Heart right ventricle (tissue), 16 donors: ENCODE measurements at regions of chr11 and their contacts with region 1.

Region 1: GRCh38 chr11:17978553-17979287 is 34.1 kb downstream of the SERGEF start:
- DNase-seq: peak; percentile 36 to 46
- ATAC-seq: peak; percentile 70 to 91 (median 84)
- H3K4me3 ChIP-seq: no peak overlapping the region
- H3K27ac ChIP-seq: no peak overlapping the region
- H3K4me1 ChIP-seq: peaks cover 0 to 19% (median 0%) of the 10 kb centered on the region in 9 donors
- H3K27me3 ChIP-seq: no peaks in the 10 kb centered on the region
- CTCF ChIP-seq: peak; percentile 38 to 81 (median 73)

Region 2: GRCh38 chr11:17405232-17406005 is 573.3 kb before region 1 on chr11:
- intact Hi-C with region 1: no loop called
- DNase-seq: peak; percentile 71 to 74
- ATAC-seq: peak; percentile 77 to 98 (median 94)
- H3K4me3 ChIP-seq: no peak overlapping the region
- H3K27ac ChIP-seq: peak overlapping the region; percentile 50 to 87 (median 75)
- H3K4me1 ChIP-seq: peaks cover 5 to 26% (median 20%) of the 10 kb centered on the region in 9 donors
- H3K27me3 ChIP-seq: no peaks in the 10 kb centered on the region
- CTCF ChIP-seq: peak in 6 of 9 donors; percentile 23 to 47 (median 36)

Region 3: DNA sequence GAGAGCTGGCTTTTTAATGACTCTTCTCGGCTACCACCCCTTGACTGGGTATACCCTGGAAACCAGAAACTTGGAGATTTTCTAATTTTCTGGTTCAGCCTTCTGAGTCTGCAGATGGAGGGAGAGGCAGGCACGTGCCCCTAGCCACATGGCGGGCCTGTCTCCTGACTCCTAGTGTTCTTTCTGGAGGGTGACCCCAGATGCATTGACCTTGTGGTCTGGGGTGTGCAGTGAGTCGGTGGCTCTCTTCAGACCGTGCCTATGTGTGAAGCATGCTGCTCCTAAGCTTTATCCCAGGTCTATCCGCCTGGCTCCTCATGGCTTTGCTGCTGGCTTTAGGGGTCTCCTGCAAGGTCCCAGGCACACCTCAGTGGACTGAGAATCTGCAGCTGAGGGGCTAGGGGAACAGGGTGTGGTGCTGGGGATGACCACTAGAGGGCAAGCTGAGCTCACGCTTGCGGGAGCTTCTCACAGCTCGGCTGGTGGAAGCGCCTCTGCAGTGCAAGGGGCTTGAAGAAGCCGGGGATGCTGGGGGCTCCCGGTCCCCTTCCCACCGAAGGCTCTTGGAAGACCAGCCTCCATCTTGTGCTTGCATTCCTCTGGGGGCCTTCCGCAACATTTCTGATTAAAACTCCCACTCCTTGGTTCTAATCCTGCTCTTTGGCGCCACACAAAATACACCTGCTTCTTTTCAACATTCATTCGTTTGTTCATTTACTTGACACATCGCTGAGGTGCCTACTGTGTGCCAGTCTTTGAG is 379.8 kb before region 1 on chr11:
- intact Hi-C with region 1: loop called (anchors 2 to 5 kb)
- DNase-seq: peak; percentile 71 to 74
- ATAC-seq: peak; percentile 73 to 86 (median 82)
- H3K4me3 ChIP-seq: no peak overlapping the region
- H3K27ac ChIP-seq: no peak overlapping the region
- H3K4me1 ChIP-seq: no peaks in the 10 kb centered on the region
- H3K27me3 ChIP-seq: peaks cover 0 to 12% (median 7%) of the 10 kb centered on the region in 7 donors
- CTCF ChIP-seq: peak; percentile 88 to 96 (median 92)

Region 4: GRCh38 chr11:17730608-17731462 is 247.9 kb before region 1 on chr11:
- intact Hi-C with region 1: loop called (anchors 1 to 10 kb)
- DNase-seq: peak; percentile 81 to 82
- ATAC-seq: peak; percentile 72 to 93 (median 90)
- H3K4me3 ChIP-seq: no peak overlapping the region
- H3K27ac ChIP-seq: no peak overlapping the region
- H3K4me1 ChIP-seq: peaks cover 4 to 20% (median 9%) of the 10 kb centered on the region in 9 donors
- H3K27me3 ChIP-seq: peaks cover 0 to 63% (median 49%) of the 10 kb centered on the region in 7 donors
- CTCF ChIP-seq: peak; percentile 74 to 93 (median 84)

Region 5: GRCh38 chr11:17750013-17750800 is 228.5 kb before region 1 on chr11:
- intact Hi-C with region 1: loop called in 2 of 10 experiments (anchors 5 kb)
- DNase-seq: peak in 1 of 2 donors; percentile 8
- ATAC-seq: peak in 6 of 8 donors; percentile 40 to 81 (median 62)
- H3K4me3 ChIP-seq: no peak overlapping the region
- H3K27ac ChIP-seq: peak overlapping the region in 3 of 10 donors; percentile 22 to 44 (median 30)
- H3K4me1 ChIP-seq: peaks cover 0 to 9% (median 0%) of the 10 kb centered on the region in 9 donors
- H3K27me3 ChIP-seq: peaks cover 0 to 7% (median 0%) of the 10 kb centered on the region in 7 donors
- CTCF ChIP-seq: no peak

Region 6: GRCh38 chr11:17760102-17761029 is 218.4 kb before region 1 on chr11:
- intact Hi-C with region 1: loop called in 9 of 10 experiments (anchors 1 to 10 kb)
- DNase-seq: peak; percentile 40 to 43
- ATAC-seq: peak; percentile 79 to 87 (median 85)
- H3K4me3 ChIP-seq: no peak overlapping the region
- H3K27ac ChIP-seq: no peak overlapping the region
- H3K4me1 ChIP-seq: peaks cover 0 to 4% (median 0%) of the 10 kb centered on the region in 9 donors
- H3K27me3 ChIP-seq: no peaks in the 10 kb centered on the region
- CTCF ChIP-seq: peak; percentile 30 to 77 (median 61)

Region 7: GRCh38 chr11:17770048-17770652 is 208.6 kb before region 1 on chr11:
- intact Hi-C with region 1: loop called in 5 of 10 experiments (anchors 5 to 10 kb)
- DNase-seq: no peak
- ATAC-seq: no peak
- H3K4me3 ChIP-seq: no peak overlapping the region
- H3K27ac ChIP-seq: no peak overlapping the region
- H3K4me1 ChIP-seq: no peaks in the 10 kb centered on the region
- H3K27me3 ChIP-seq: no peaks in the 10 kb centered on the region
- CTCF ChIP-seq: no peak

Region 8: DNA sequence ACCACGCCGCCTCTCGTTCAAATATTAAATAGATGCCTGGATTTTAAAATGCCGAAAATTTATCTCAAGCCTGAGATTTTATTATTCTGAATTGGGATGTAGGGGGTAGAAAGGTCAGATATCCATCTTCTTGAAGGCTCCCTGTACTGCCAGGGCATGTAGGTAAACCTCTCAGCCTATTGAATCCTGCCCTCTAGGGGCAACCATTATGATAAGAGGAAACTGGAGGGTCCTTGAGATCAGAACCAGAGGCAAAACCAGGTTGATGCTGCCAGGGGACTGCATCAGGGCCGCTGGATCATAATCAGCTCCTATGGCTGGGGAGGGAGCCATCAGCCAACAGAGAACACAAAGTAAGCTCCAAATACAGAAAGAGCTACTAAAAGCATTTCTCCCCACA is 151.7 kb before region 1 on chr11:
- intact Hi-C with region 1: no loop called
- DNase-seq: no peak
- ATAC-seq: no peak
- H3K4me3 ChIP-seq: no peak overlapping the region
- H3K27ac ChIP-seq: no peak overlapping the region
- H3K4me1 ChIP-seq: peaks cover 3 to 39% (median 14%) of the 10 kb centered on the region in 9 donors
- H3K27me3 ChIP-seq: no peaks in the 10 kb centered on the region
- CTCF ChIP-seq: peak in 2 of 9 donors; percentile 13 to 17

Region 9: DNA sequence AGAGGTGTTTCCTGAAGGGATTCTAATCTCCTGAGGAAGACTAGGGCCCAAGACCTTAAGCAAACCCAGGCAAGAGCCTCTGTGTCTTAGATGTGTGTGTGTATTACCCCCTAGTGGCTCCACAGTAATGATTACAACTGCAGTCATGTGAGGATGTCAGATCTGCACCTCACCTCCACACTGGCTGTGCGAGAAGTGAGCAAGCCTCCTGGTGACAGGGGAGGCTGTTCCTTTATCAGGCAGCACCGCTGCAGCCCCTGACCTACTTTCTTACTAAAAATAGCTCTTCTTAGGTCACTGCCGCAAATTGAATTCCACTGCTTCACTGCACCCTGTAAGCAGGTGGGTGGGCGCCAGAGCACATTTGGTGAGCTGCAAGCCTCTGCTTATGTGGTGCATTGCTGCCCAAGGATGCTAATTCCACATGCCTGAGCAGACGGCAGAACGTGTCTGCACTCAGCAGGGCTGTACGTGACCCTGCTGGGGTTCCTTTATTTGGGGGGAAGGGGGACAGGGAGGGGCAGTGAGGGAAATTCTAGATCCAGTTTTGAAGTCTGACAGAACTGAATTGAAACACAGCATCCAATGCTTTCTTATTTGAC is 131.8 kb before region 1 on chr11:
- intact Hi-C with region 1: loop called in 3 of 10 experiments (anchors 10 kb)
- DNase-seq: peak in 1 of 2 donors; percentile 27
- ATAC-seq: peak in 7 of 8 donors; percentile 59 to 83 (median 76)
- H3K4me3 ChIP-seq: no peak overlapping the region
- H3K27ac ChIP-seq: no peak overlapping the region
- H3K4me1 ChIP-seq: peaks cover 0 to 18% (median 3%) of the 10 kb centered on the region in 9 donors
- H3K27me3 ChIP-seq: no peaks in the 10 kb centered on the region
- CTCF ChIP-seq: peak in 6 of 9 donors; percentile 17 to 51 (median 40)

Region 10: DNA sequence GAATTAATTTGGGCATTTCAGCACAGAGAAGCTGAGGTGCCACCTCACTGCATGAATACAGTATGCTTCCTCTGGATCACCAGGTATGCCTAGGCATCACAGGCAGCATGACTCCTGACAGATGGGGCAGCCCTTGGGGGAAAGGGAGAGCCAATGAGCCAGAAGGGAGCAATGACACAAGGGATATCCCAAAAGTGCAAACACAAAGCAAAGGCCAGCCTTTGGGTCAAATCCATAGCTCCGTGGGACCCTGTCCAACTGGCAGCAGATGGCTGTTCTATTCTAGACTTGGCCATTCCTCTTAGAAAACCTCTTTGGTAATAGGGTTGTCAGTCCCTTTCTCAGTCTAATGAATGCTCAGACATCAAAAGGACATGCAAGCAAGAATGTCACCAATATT is 39.2 kb before region 1 on chr11:
- intact Hi-C with region 1: no loop called
- DNase-seq: peak in 1 of 2 donors; percentile 28
- ATAC-seq: peak in 4 of 8 donors; percentile 56 to 81 (median 68)
- H3K4me3 ChIP-seq: no peak overlapping the region
- H3K27ac ChIP-seq: no peak overlapping the region
- H3K4me1 ChIP-seq: peaks cover 0 to 11% (median 0%) of the 10 kb centered on the region in 9 donors
- H3K27me3 ChIP-seq: no peaks in the 10 kb centered on the region
- CTCF ChIP-seq: no peak